H1 (cell line): ENCODE measurements at regions of chr11 and their contacts with region 1.

Region 1: DNA sequence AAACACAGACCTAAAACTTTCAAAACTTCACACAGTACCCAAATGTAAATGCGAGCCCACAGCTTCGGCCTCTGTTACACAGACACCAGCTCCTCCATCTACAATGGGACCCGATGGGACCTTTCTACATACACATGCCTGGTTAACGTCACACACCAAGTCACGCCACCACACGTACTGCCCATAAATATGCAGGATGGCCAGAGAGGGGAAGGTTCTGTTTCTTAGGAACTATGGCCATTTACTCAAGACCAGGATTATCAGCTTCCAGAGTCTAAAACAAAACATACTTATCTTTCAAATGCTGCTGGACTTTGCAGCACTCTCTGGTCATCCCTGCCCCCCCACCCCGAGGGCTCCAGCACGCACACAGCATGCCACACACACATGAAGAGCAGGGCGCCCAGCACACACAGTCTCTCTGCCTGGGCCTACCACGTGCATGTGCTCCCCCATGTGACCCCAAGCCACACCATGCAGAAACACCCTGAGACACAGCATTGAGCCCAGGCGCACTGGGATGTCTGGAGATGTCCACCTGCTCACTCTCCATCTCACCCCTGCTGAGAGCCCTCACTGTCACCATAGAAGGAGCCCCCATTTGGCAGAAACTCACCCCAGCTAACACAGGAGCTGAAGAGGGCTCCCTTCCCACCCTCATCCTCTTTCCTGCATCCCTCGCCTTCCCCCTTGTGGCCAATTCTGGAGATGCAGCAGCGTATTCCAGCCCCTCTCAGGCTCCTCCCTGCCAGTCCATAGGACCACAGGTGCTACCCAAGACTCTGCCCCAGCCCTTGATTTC is 61.8 kb downstream of the SLC22A12 start:
- DNase-seq: peak; percentile 67 to 99
- H3K4me3 ChIP-seq: peak overlapping the region in 1 of 4 experiments; percentile 15; a peak in 1 of 8 replicates
- H3K27ac ChIP-seq: no peak overlapping the region
- H3K4me1 ChIP-seq: peaks cover 0 to 8% (median 5%) of the 10 kb centered on the region in 4 experiments; a peak in 3 of 7 replicates
- H3K27me3 ChIP-seq: peaks cover 0 to 5% (median 2%) of the 10 kb centered on the region in 4 experiments; a peak in 3 of 7 replicates
- CTCF ChIP-seq: peak; percentile 93 to 97 (median 94)
- EP300 ChIP-seq: no peak
- POLR2A ChIP-seq: no peak
- RAD21 ChIP-seq: peak; percentile 81 to 87

Region 2: DNA sequence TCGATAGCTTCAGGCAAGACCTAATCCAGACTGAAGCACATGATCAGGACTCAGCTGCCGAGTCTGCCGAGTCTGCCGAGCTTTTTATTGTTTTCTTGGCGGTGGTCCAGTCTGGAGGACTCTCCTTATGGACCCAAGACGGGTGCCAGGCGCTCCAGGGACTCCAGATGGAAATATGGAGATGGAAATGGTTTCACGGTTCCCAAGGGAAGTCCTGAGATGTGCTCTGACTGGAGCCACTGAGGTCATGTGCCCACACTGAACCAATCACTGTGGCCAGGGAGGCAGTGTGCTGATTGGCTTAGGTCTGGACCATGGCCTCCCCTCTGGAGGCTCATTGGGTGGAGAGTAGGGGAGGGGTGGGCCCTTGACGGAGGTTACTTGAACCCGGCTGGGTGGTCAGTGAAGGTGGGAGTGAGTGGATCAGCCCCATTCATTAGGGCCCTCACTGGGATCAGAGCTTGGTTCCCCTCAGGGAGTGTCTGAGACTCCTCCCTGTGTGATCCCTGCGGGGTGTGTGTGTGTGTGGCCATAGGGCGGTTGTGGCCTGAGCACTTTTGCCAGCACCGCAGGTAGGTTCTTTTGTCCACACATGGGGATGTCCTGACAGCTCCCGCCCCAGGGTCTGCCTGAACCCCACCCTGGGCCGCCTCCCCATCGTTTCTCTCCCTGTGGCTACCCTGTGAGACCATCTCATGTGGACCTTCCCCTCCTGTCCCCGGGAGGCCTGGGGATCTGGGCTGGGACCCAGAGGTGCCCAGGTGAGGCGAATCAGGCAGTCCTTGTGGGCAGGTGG is 279.8 kb before region 1 on chr11:
- CTCF ChIA-PET with region 1: interaction called, 10 read pairs
- POLR2A ChIA-PET with region 1: no interaction called
- DNase-seq: peak in 1 of 2 experiments; percentile 62
- H3K4me3 ChIP-seq: peak overlapping the region in 1 of 4 experiments; percentile 35; a peak in 2 of 8 replicates
- H3K27ac ChIP-seq: no peak overlapping the region
- H3K4me1 ChIP-seq: peaks cover 0 to 5% (median 2%) of the 10 kb centered on the region in 4 experiments; a peak in 4 of 7 replicates
- H3K27me3 ChIP-seq: no peaks in the 10 kb centered on the region
- CTCF ChIP-seq: no peak
- EP300 ChIP-seq: no peak
- POLR2A ChIP-seq: no peak; a peak in 1 of 3 replicates
- RAD21 ChIP-seq: no peak

Region 3: DNA sequence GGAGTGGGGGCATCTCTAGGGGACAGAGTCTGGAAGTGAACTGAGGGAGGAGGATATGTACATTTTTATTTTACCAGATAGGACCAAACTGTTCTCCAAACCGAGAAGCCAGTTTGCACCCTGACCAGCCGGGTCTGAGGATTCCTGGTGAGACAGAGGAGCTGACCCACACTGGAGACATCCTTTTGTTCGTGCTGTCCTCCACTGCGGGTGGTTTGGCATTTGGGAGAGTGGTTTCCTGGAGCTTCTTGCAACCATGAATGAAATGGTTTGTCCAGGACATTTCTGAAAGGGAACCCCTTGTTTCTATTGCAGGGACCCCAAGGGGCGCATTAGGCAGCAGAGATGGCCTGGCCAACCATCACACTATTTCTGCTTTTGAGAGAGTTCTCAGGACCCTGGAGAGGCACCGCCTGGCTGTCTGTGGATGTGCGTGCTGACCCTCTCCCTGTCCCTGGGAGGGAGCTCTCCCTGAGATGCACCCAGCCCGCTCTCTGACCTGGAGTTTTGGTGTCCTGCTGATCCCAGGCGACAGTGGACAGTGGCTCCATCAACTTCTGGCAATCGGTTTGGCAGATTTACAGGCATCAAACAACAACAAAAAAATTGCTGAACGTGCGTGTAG is 142.1 kb before region 1 on chr11:
- CTCF ChIA-PET with region 1: interaction called, 20 read pairs
- POLR2A ChIA-PET with region 1: no interaction called
- DNase-seq: no peak
- H3K4me3 ChIP-seq: no peak overlapping the region
- H3K27ac ChIP-seq: no peak overlapping the region
- H3K4me1 ChIP-seq: no peaks in the 10 kb centered on the region
- H3K27me3 ChIP-seq: peaks cover 0 to 8% (median 2%) of the 10 kb centered on the region in 4 experiments; a peak in 4 of 7 replicates
- CTCF ChIP-seq: no peak
- EP300 ChIP-seq: no peak
- POLR2A ChIP-seq: no peak
- RAD21 ChIP-seq: peak in 1 of 2 experiments; percentile 8; a peak in 1 of 4 replicates

Region 4: GRCh38 chr11:64566042-64566914 is 86.5 kb before region 1 on chr11:
- CTCF ChIA-PET with region 1: interaction called, 75 read pairs
- POLR2A ChIA-PET with region 1: interaction called, 5 read pairs
- DNase-seq: peak in 1 of 2 experiments; percentile 74
- H3K4me3 ChIP-seq: peak overlapping the region in 3 of 4 experiments; percentile 21 to 53 (median 27); a peak in 4 of 8 replicates
- H3K27ac ChIP-seq: peak overlapping the region; percentile 47; the same call in 1 of the 2 replicates
- H3K4me1 ChIP-seq: peaks cover 0 to 29% (median 19%) of the 10 kb centered on the region in 4 experiments; a peak in 6 of 7 replicates
- H3K27me3 ChIP-seq: peaks cover 0 to 3% (median 0%) of the 10 kb centered on the region in 4 experiments; a peak in 1 of 7 replicates
- CTCF ChIP-seq: no peak
- EP300 ChIP-seq: no peak
- POLR2A ChIP-seq: peak in 1 of 2 experiments; percentile 31; a peak in 2 of 3 replicates
- RAD21 ChIP-seq: no peak

Region 5: GRCh38 chr11:64629796-64630562 is 22.8 kb before region 1 on chr11:
- CTCF ChIA-PET with region 1: interaction called, 188 read pairs
- POLR2A ChIA-PET with region 1: no interaction called
- DNase-seq: peak; percentile 70 to 100
- H3K4me3 ChIP-seq: peak overlapping the region in 1 of 4 experiments; percentile 5; a peak in 1 of 8 replicates
- H3K27ac ChIP-seq: no peak overlapping the region
- H3K4me1 ChIP-seq: peaks cover 0 to 10% (median 5%) of the 10 kb centered on the region in 4 experiments; a peak in 6 of 7 replicates
- H3K27me3 ChIP-seq: peaks cover 0 to 19% (median 12%) of the 10 kb centered on the region in 4 experiments; a peak in 5 of 7 replicates
- CTCF ChIP-seq: peak; percentile 63 to 87 (median 65)
- EP300 ChIP-seq: no peak
- POLR2A ChIP-seq: no peak
- RAD21 ChIP-seq: peak; percentile 59

Region 6: DNA sequence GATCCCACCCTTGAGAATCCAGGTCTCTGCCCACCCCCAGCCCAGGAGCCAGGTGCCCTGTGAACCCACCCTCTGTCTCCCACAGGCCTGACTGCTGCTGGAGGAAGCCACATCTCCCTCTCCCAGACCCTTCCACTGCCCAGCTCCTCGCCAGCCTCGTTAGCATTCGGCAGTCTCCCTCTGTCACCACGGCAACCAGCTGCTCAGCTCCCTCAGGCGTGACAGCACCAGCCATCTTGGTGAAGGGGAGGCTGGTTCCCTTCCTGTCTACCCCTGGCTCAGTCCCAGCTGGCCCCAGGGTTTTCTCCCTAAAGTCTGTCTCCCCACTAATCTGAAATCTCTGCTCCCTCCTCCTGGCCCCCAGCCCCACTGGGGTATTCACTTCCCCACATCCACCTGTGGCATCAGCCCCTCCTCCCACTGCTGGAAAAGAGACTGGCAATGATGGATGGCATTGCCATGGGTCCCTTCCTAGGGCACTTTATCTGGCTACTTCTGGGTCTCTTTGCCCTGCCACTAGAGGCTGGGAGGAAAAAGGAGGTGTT is 42.1 kb after region 1 on chr11:
- CTCF ChIA-PET with region 1: interaction called, 34 read pairs
- POLR2A ChIA-PET with region 1: no interaction called
- DNase-seq: peak in 1 of 2 experiments; percentile 74
- H3K4me3 ChIP-seq: no peak overlapping the region
- H3K27ac ChIP-seq: no peak overlapping the region
- H3K4me1 ChIP-seq: no peaks in the 10 kb centered on the region; a peak in 3 of 7 replicates
- H3K27me3 ChIP-seq: peaks cover 0 to 4% (median under 1%) of the 10 kb centered on the region in 4 experiments; a peak in 3 of 7 replicates
- CTCF ChIP-seq: no peak
- EP300 ChIP-seq: no peak
- POLR2A ChIP-seq: no peak
- RAD21 ChIP-seq: no peak

Region 7: DNA sequence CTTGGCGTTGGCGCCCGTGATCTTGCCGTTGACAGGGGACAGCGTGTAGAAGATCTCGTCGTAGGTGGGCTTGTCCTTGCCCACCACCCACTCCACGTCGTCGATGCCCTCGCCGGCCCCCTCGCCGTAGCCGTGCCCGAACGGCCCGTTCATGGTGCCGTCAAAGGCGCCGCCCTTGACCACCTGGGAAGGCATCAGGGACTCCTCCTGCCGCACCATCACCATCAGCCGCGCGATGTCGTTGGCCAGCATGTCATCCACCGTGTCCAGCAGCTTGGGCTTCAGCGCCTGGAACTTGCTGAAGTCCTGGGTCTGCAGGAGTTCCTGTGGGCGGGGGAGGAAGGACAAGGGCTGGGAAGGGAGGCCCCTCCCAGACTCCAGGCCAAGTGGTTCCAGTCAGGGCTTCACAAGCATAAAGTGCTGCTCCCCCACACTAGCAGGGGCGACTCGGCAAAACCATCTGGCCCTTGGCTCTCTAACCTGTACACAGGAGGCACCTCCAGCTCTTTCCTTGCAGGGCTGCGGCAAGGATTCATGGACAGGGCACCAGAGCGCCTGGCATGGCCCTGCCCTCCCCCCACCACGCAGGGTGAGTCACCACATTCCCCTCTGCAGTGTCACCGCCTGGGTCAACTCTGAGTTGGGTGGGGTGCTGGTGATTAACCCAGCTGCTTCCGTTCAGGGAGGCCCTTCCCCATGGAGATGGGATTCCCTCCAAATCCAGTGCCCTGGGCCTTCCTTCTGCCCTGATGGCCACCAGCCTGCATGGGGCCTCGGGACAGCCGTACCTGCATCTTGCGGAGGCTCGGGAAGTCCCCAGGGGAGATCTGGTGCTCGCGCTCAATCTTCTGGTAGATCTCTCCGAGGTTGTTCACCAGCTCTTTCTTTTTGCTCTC is 202.0 kb after region 1 on chr11:
- CTCF ChIA-PET with region 1: no interaction called
- POLR2A ChIA-PET with region 1: no interaction called
- DNase-seq: no peak
- H3K4me3 ChIP-seq: no peak overlapping the region
- H3K27ac ChIP-seq: no peak overlapping the region
- H3K4me1 ChIP-seq: peaks cover 0 to 12% (median 5%) of the 10 kb centered on the region in 4 experiments; a peak in 5 of 7 replicates
- H3K27me3 ChIP-seq: no peaks in the 10 kb centered on the region
- CTCF ChIP-seq: no peak
- EP300 ChIP-seq: no peak
- POLR2A ChIP-seq: no peak
- RAD21 ChIP-seq: no peak